IMR-90 (cell line): ENCODE measurements at regions of chr13 and their contacts with region 1.

Region 1: GRCh38 chr13:107205303-107206104 is 637.6 kb upstream of the ARGLU1 start:
- DNase-seq: peak; percentile 66
- ATAC-seq: peak; percentile 90
- H3K4me3 ChIP-seq: no peak overlapping the region
- H3K27ac ChIP-seq: no peak overlapping the region
- H3K4me1 ChIP-seq: peaks cover 3% of the 10 kb centered on the region
- H3K27me3 ChIP-seq: no peaks in the 10 kb centered on the region
- CTCF ChIP-seq: peak; percentile 98
- POLR2A ChIP-seq: no peak
- RAD21 ChIP-seq: peak; percentile 91

Region 2: GRCh38 chr13:106899439-106899838 is 306.1 kb before region 1 on chr13:
- CTCF ChIA-PET with region 1: no interaction called
- POLR2A ChIA-PET with region 1: no interaction called
- dilution Hi-C with region 1: no loop called
- in situ Hi-C with region 1: no loop called
- intact Hi-C with region 1: no loop called
- DNase-seq: no peak
- ATAC-seq: no peak
- H3K4me3 ChIP-seq: no peak overlapping the region
- H3K27ac ChIP-seq: no peak overlapping the region
- H3K4me1 ChIP-seq: no peaks in the 10 kb centered on the region
- H3K27me3 ChIP-seq: peaks cover 2% of the 10 kb centered on the region
- CTCF ChIP-seq: no peak
- POLR2A ChIP-seq: no peak
- RAD21 ChIP-seq: no peak

Region 3: DNA sequence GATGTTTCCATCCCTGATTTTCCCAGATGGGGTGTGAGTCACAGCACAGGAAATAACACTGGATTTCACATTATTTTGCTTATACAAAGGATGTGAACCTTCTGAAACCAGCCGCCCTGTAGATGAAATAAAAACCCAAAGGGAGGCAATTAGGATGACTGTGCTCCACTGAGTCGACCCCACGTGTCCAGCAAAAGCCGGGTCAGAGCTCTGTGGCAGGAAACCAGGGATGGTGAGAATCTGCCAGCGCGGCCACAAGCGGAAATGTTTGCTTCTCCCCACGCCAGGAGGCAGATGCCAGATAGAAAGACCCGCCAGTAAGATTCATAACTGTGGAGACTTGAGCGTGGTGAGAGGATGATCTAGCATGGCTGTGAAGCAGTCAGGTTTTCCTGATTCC is 245.4 kb after region 1 on chr13:
- CTCF ChIA-PET with region 1: interaction called, 4 read pairs
- POLR2A ChIA-PET with region 1: no interaction called
- dilution Hi-C with region 1: no loop called
- in situ Hi-C with region 1: no loop called
- intact Hi-C with region 1: loop called (anchors 10 kb)
- DNase-seq: peak; percentile 99
- ATAC-seq: peak; percentile 95
- H3K4me3 ChIP-seq: no peak overlapping the region
- H3K27ac ChIP-seq: peak overlapping the region; percentile 50
- H3K4me1 ChIP-seq: peaks cover 16% of the 10 kb centered on the region
- H3K27me3 ChIP-seq: no peaks in the 10 kb centered on the region
- CTCF ChIP-seq: no peak
- POLR2A ChIP-seq: no peak
- RAD21 ChIP-seq: peak; percentile 29; the same call in 1 of the 2 replicates

Region 4: GRCh38 chr13:107466326-107467099 is 261.0 kb after region 1 on chr13:
- CTCF ChIA-PET with region 1: no interaction called
- POLR2A ChIA-PET with region 1: no interaction called
- dilution Hi-C with region 1: no loop called
- in situ Hi-C with region 1: no loop called
- intact Hi-C with region 1: no loop called
- DNase-seq: peak; percentile 62
- ATAC-seq: no peak
- H3K4me3 ChIP-seq: no peak overlapping the region
- H3K27ac ChIP-seq: no peak overlapping the region
- H3K4me1 ChIP-seq: peaks cover 7% of the 10 kb centered on the region
- H3K27me3 ChIP-seq: no peaks in the 10 kb centered on the region
- CTCF ChIP-seq: no peak
- POLR2A ChIP-seq: no peak
- RAD21 ChIP-seq: no peak

Region 5: DNA sequence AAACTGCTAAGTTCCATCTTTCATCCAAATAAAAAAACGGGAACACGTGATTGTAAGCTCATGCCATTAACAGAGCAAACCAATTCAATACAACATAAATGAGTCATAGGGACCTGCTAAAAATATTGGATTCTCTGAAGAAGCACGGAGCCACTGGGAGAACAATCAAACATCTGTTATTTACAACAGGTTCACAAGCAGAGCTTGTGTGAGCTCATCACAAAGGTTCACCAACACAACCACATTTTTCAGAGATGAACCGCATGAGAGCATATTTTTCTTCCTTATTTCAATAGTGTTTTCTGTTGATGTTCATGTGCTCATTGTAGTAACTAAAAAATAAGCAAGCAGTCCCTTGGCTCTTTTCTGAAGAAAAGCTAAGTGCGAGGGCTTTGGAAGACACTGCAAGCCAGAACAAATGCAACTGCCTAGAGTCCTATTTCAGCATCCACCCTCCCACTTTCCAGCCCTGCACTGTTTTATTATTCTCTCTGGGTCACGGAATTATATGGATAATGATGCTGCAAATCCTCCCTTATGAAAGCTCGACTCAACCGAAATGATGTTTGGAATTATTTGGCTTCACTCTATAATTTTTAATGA is 464.0 kb after region 1 on chr13:
- CTCF ChIA-PET with region 1: no interaction called
- POLR2A ChIA-PET with region 1: no interaction called
- dilution Hi-C with region 1: no loop called
- in situ Hi-C with region 1: loop called (anchors 5 kb)
- intact Hi-C with region 1: no loop called
- DNase-seq: peak; percentile 79
- ATAC-seq: peak; percentile 35; the same call in 1 of the 2 replicates
- H3K4me3 ChIP-seq: no peak overlapping the region
- H3K27ac ChIP-seq: no peak overlapping the region
- H3K4me1 ChIP-seq: 0 out of 2 replicates have a peak, but pooled peaks cover 2% of the 10 kb centered on the region
- H3K27me3 ChIP-seq: no peaks in the 10 kb centered on the region
- CTCF ChIP-seq: no peak
- POLR2A ChIP-seq: no peak
- RAD21 ChIP-seq: no peak

Region 6: GRCh38 chr13:107743983-107744382 is 538.5 kb after region 1 on chr13:
- CTCF ChIA-PET with region 1: no interaction called
- POLR2A ChIA-PET with region 1: no interaction called
- dilution Hi-C with region 1: no loop called
- in situ Hi-C with region 1: no loop called
- intact Hi-C with region 1: loop called (anchors 5 kb)
- DNase-seq: peak; percentile 84
- ATAC-seq: peak; percentile 71
- H3K4me3 ChIP-seq: no peak overlapping the region
- H3K27ac ChIP-seq: no peak overlapping the region
- H3K4me1 ChIP-seq: peaks cover 5% of the 10 kb centered on the region
- H3K27me3 ChIP-seq: no peaks in the 10 kb centered on the region
- CTCF ChIP-seq: no peak
- POLR2A ChIP-seq: no peak
- RAD21 ChIP-seq: no peak

Region 7: GRCh38 chr13:107764046-107764445 is 558.5 kb after region 1 on chr13:
- CTCF ChIA-PET with region 1: no interaction called
- POLR2A ChIA-PET with region 1: no interaction called
- dilution Hi-C with region 1: no loop called
- in situ Hi-C with region 1: no loop called
- intact Hi-C with region 1: no loop called
- DNase-seq: no peak
- ATAC-seq: no peak; the same call in 1 of the 2 replicates
- H3K4me3 ChIP-seq: no peak overlapping the region
- H3K27ac ChIP-seq: peak overlapping the region; percentile 25; the same call in 1 of the 2 replicates
- H3K4me1 ChIP-seq: peaks cover 17% of the 10 kb centered on the region
- H3K27me3 ChIP-seq: no peaks in the 10 kb centered on the region
- CTCF ChIP-seq: no peak
- POLR2A ChIP-seq: no peak
- RAD21 ChIP-seq: no peak

Region 8: DNA sequence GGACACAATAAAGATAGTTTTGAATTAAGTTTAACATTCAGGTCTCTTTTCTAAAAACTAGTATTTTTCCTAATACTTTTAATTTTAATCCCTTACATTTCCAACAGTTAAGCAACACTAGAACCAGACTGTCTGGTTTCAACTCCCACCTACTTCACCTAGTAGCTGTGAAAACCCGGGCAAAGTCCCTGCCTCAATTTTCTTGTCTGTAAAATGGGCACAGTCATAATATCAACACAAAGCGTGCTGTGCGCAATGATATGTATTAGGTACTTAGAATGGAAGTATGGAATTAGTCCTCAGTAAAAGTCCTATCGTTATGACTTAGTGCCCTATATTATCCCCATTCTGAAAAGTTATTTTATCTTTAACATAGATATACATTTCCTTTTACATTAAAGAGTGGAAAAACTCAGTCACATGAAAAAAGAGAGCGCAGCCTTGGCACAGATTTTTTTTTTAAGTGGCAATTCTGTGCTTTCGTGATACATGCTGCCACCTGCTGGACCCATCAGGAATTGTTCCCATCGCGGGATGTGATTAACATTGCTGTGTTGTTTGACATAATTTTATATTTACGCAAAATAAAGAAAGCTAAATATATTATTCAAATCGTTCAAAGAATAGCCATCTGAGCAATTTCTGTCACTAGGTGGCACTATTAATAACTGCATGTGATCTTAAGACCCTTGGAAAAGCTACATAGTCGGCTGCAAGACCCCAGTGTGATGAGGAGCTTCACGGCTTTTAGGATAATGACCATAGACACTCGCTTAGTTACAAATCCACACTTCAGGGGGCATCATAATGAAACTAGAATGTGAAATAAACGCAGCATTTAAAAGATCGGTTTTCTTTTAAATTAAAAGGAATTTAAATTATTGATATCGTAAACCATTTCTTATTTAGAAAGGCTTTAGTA is 949.9 kb after region 1 on chr13:
- CTCF ChIA-PET with region 1: interaction called, 4 read pairs
- POLR2A ChIA-PET with region 1: no interaction called
- dilution Hi-C with region 1: no loop called
- in situ Hi-C with region 1: loop called (anchors 5 kb)
- intact Hi-C with region 1: loop called (anchors 1 kb)
- DNase-seq: peak; percentile 52
- ATAC-seq: peak; percentile 65; the same call in 1 of the 2 replicates
- H3K4me3 ChIP-seq: no peak overlapping the region
- H3K27ac ChIP-seq: no peak overlapping the region
- H3K4me1 ChIP-seq: no peaks in the 10 kb centered on the region
- H3K27me3 ChIP-seq: peaks cover 2% of the 10 kb centered on the region
- CTCF ChIP-seq: peak; percentile 85
- POLR2A ChIP-seq: no peak
- RAD21 ChIP-seq: peak; percentile 78